Thyroid gland (tissue), 4 donors: ENCODE measurements at regions of chr17 and their contacts with region 1.

Region 1: DNA sequence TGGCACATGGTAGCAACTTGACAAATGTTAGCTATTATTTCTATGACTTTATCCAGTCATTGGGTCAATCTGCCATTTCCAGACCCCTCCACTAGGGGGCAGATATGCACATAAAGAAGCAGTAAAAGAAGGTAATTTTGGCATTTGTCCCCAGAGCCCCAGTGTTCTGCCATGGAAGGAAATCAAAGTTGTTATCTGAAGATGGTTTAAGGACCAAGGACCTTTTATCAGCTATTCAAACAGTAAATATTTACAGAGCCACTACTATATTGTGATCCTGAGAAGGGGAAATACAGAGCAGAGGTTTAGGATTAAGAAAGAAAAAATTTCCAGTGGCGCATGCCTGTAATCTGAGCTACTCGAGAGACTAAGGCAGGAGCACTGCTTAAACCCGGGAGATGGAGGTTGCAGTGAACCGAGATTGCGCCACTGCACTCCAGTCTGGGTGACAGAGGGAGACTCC is 20.0 kb downstream of the TRAF4 start:
- DNase-seq: peak; percentile 82 to 86
- H3K4me3 ChIP-seq: no peak overlapping the region
- H3K27ac ChIP-seq: no peak overlapping the region
- H3K4me1 ChIP-seq: peaks cover 3 to 11% of the 10 kb centered on the region in 2 donors
- H3K27me3 ChIP-seq: no peaks in the 10 kb centered on the region
- CTCF ChIP-seq: peak; percentile 76 to 90 (median 85)
- POLR2A ChIP-seq: no peak

Region 2: DNA sequence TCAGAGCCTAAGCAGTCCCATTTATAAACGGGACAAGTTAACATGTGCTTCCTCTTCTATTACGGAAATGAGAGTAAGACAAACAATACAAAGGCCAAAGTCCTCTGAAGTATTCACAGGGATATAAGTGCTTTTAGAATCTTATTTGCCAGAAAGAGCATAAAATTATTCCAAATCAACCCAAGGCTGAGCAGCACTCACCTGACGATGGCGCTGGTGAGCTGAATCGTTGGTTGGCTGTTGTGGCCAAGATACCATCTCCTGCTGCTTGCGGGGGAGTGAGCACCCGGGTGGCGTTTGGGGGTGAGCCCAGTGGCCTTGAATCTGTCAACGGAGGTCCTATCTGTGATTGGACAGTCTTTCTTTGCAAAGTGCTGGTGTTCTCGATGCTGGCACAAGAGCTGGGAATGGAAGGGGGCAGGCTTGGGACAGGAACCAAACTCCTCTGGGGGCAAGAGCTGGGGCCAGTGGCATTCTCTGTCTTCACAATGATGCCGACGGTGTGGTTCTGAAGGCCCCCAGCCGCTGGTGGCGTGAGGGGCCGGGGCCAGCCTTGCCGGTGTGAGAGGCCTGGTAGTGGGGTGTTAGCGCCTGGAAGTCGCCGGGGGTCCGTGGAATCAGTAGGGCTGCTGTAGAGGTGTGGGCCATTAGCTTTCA is 148.6 kb after region 1 on chr17:
- intact Hi-C with region 1: loop called (anchors 5 kb)
- DNase-seq: no peak
- H3K4me3 ChIP-seq: no peak overlapping the region
- H3K27ac ChIP-seq: no peak overlapping the region
- H3K4me1 ChIP-seq: peaks cover 0 to 11% of the 10 kb centered on the region in 2 donors
- H3K27me3 ChIP-seq: no peaks in the 10 kb centered on the region
- CTCF ChIP-seq: no peak
- POLR2A ChIP-seq: no peak